HAP-1 (cell line): ENCODE measurements at regions of chr5 and their contacts with region 1.

Region 1: GRCh38 chr5:135466178-135467050 is 14.3 kb upstream of the TIFAB start:
- DNase-seq: peak; percentile 78 to 89
- H3K4me3 ChIP-seq: no peak overlapping the region
- H3K4me1 ChIP-seq: peaks cover 3% of the 10 kb centered on the region
- H3K27me3 ChIP-seq: peaks cover 4% of the 10 kb centered on the region; the same call in 1 of the 2 replicates

Region 2: GRCh38 chr5:135034236-135034962 is 432.0 kb before region 1 on chr5:
- in situ Hi-C with region 1: no loop called
- DNase-seq: peak; percentile 85 to 93
- H3K4me3 ChIP-seq: peak overlapping the region; percentile 87
- H3K4me1 ChIP-seq: peaks cover 7% of the 10 kb centered on the region
- H3K27me3 ChIP-seq: peaks cover 13% of the 10 kb centered on the region

Region 3: DNA sequence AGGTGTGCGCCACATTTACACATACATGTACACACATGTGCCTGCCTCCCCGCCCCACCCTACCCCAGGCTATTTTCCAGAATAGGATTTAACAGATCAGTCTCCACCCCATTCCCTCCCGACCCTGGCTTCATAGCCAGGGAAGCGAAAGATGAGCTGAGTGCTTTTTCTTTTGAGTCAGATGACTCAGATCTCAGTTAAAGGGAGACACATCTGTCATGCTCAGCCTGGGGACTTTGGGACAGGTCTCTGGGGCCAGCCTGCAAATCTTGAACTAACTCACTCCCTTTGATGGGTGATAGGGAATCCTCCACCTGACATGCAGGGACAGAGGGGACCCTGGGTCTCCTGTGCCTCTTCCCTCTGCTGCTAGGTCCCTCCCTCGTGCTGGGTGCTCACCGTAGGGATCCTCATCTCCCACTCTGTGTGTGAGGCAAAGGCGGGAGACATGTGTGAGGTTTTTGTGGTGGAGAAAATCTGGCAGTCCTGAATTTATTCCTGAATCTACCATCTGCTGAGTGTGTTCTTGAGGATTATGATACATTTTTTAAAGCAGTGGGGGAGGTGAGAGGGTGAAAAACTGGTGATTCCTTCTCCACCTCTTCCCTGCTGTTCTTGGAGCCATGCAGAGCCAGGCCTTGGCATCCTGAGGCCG is 31.7 kb after region 1 on chr5:
- in situ Hi-C with region 1: no loop called
- DNase-seq: no peak
- H3K4me3 ChIP-seq: no peak overlapping the region
- H3K4me1 ChIP-seq: no peaks in the 10 kb centered on the region
- H3K27me3 ChIP-seq: no peaks in the 10 kb centered on the region

Region 4: GRCh38 chr5:135551593-135552447 is 85.4 kb after region 1 on chr5:
- in situ Hi-C with region 1: loop called (anchors 5 kb)
- DNase-seq: peak; percentile 55 to 86
- H3K4me3 ChIP-seq: no peak overlapping the region
- H3K4me1 ChIP-seq: no peaks in the 10 kb centered on the region
- H3K27me3 ChIP-seq: peaks cover 4% of the 10 kb centered on the region; the same call in 1 of the 2 replicates

Region 5: DNA sequence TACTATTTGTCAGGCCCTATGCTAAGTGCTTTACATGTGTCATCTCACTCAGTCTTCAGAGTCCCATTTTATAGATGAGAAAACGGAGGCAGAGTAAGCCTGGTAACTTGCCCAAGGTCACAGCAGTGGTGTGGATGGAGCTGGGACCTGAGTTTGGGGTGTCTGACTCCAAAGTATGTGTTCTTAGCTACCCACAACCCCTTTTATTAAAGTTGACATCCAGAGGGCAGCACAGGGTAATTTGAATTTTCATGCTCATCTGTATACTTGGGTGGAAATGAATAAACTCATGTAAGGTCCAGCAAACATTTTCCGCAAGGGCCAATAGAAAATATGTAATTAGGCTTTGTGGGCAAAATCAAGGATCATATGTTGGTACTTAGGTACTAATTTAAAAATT is 274.6 kb after region 1 on chr5:
- in situ Hi-C with region 1: loop called (anchors 10 kb)
- DNase-seq: no peak
- H3K4me3 ChIP-seq: no peak overlapping the region
- H3K4me1 ChIP-seq: no peaks in the 10 kb centered on the region
- H3K27me3 ChIP-seq: no peaks in the 10 kb centered on the region

Region 6: DNA sequence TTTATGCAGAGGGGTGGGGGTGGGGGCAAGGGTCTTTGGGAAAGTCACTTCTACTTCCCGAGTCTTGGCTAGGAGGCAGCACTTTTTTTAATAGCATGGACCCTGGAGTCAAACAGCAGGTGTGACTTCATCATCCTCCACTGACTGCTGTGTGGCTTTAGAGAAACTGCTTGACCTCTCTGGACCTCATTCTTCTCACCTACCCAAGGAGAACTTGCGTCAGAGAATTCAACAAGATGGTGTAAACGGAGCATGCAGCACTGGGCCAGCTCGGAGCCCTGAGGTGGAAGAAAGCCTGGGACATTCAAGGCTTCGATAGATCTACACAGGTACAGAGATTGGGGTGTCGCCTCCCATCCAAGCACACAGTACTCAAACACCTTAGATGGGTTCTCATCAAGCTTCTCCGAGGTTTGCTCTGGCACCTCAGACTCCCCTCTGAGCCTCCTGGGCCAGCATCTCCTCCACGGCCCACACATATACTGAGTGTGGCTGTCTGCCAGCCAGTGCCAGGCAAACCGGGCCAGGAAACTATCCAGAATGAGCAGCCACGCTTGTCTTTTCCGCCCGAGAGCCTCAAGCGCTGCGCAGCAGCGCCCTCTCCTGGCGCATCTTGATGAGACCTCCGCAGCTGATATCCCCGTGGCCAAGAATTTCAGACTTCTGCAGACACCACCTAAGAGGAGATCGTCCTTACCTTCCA is 363.4 kb after region 1 on chr5:
- in situ Hi-C with region 1: loop called (anchors 5 kb)
- DNase-seq: peak; percentile 49 to 85
- H3K4me3 ChIP-seq: no peak overlapping the region
- H3K4me1 ChIP-seq: peaks cover 1% of the 10 kb centered on the region
- H3K27me3 ChIP-seq: no peaks in the 10 kb centered on the region

Region 7: GRCh38 chr5:136103118-136103517 is 636.7 kb after region 1 on chr5:
- in situ Hi-C with region 1: no loop called
- DNase-seq: no peak
- H3K4me3 ChIP-seq: no peak overlapping the region
- H3K4me1 ChIP-seq: no peaks in the 10 kb centered on the region
- H3K27me3 ChIP-seq: no peaks in the 10 kb centered on the region